GM12878 (cell line): ENCODE measurements at regions of chr4 and their contacts with region 1.

Region 1: GRCh38 chr4:25180524-25181131 is 20.4 kb upstream of the SEPSECS start:
- DNase-seq: no peak
- ATAC-seq: peak; percentile 99
- H3K4me3 ChIP-seq: no peak overlapping the region
- H3K27ac ChIP-seq: no peak overlapping the region
- H3K4me1 ChIP-seq: no peaks in the 10 kb centered on the region
- H3K27me3 ChIP-seq: no peaks in the 10 kb centered on the region
- CTCF ChIP-seq: peak; percentile 61 to 75 (median 65)
- EP300 ChIP-seq: no peak
- POLR2A ChIP-seq: no peak
- RAD21 ChIP-seq: peak; percentile 69

Region 2: GRCh38 chr4:24713604-24714003 is 467.0 kb before region 1 on chr4:
- CTCF ChIA-PET with region 1: no interaction called
- POLR2A ChIA-PET with region 1: no interaction called
- RAD21 ChIA-PET with region 1: no interaction called
- SMC1A ChIA-PET with region 1: no interaction called
- in situ Hi-C with region 1: no loop called
- intact Hi-C with region 1: no loop called
- DNase-seq: no peak
- ATAC-seq: no peak
- H3K4me3 ChIP-seq: no peak overlapping the region
- H3K27ac ChIP-seq: no peak overlapping the region
- H3K4me1 ChIP-seq: no peaks in the 10 kb centered on the region
- H3K27me3 ChIP-seq: no peaks in the 10 kb centered on the region
- CTCF ChIP-seq: no peak
- EP300 ChIP-seq: no peak
- POLR2A ChIP-seq: no peak
- RAD21 ChIP-seq: no peak

Region 3: DNA sequence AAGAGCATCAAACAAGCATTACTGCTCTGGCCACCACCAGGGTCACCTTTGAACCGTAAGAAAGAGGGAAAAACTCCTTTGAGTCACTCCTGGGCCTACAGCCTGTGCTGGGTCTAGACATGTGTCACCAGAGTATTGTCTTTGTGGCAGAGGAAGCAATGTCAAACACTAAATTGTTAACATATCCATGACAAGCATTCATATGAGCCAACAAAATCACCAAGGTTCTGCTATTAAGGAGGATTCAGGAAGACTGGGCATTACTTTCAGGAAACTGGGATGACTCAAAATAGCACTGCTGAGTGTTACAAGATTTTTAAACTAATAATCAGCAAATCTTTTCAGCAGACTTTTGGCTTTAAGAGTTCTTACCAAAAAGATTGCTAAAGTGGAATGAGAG is 177.9 kb before region 1 on chr4:
- CTCF ChIA-PET with region 1: no interaction called
- POLR2A ChIA-PET with region 1: no interaction called
- RAD21 ChIA-PET with region 1: no interaction called
- SMC1A ChIA-PET with region 1: no interaction called
- in situ Hi-C with region 1: no loop called
- intact Hi-C with region 1: no loop called
- DNase-seq: no peak
- ATAC-seq: no peak
- H3K4me3 ChIP-seq: no peak overlapping the region
- H3K27ac ChIP-seq: no peak overlapping the region
- H3K4me1 ChIP-seq: no peaks in the 10 kb centered on the region
- H3K27me3 ChIP-seq: 0 out of 4 replicates have a peak, but pooled peaks cover 0 to 1% of the 10 kb centered on the region in 2 experiments
- CTCF ChIP-seq: no peak
- EP300 ChIP-seq: no peak
- POLR2A ChIP-seq: no peak
- RAD21 ChIP-seq: no peak

Region 4: DNA sequence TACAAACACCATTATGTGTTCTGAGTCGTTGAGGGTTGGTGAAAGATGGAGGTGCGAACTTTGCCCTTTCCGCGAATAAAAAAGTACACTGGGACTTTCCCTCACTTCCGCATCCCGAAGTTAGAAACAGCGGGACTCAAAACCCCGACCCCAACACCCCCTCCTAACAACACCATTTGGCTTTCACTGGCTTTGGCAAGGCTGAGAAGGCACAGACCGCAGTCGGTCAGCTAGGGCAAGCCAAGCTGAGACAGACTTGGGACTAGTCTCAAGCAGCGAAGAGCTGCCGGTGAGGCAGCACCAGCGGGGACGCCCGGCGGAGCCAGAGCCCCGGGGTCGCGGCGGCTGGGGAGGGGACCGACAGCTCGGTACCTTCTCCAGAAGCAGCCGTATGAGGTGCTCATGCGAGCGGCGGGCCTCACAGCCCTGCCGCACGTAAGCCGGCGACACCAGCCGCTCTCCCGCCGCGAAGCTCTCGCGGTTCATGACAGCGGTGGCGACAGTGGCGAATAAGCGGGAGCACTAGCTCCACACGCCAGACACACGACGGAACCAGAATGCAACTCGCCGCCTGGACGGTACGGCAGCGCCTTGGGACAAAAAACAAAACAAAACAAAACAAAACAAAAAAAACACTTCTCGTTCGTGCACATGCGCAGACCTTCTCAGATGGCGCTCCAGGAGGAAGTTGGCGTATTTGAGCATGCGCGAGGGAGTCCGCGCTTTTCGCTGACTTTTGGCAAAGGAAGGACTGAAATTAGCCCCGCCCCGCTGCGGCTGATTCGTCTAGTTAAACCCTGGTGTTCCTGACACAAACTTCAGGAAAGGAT is 20.5 kb before region 1 on chr4 and contains the start of gene SEPSECS:
- CTCF ChIA-PET with region 1: interaction called, 12 read pairs
- POLR2A ChIA-PET with region 1: interaction called, 3 read pairs
- RAD21 ChIA-PET with region 1: interaction called, 4 read pairs
- SMC1A ChIA-PET with region 1: interaction called, 9 read pairs
- in situ Hi-C with region 1: no loop called
- intact Hi-C with region 1: no loop called
- DNase-seq: peak; percentile 96
- ATAC-seq: peak; percentile 90
- H3K4me3 ChIP-seq: peak within 1 kb of the TSS; percentile 94
- H3K27ac ChIP-seq: peak within 1 kb of the TSS; percentile 96
- H3K4me1 ChIP-seq: peaks cover 4% of the 10 kb centered on the region
- H3K27me3 ChIP-seq: no peaks in the 10 kb centered on the region
- CTCF ChIP-seq: no peak
- EP300 ChIP-seq: no peak
- POLR2A ChIP-seq: peak; percentile 96
- RAD21 ChIP-seq: no peak
- polyA plus RNA-seq, gene SEPSECS: 2.8 to 2.9 TPM